Heart left ventricle (tissue), 16 donors: ENCODE measurements at regions of chr6 and their contacts with region 1.

Region 1: GRCh38 chr6:164106345-164106769 is 691.8 kb downstream of the QKI start:
- DNase-seq: peak in 4 of 5 donors; percentile 74 to 86 (median 80)
- ATAC-seq: peak; percentile 38 to 57 (median 49)
- H3K4me3 ChIP-seq: peak overlapping the region in 10 of 12 donors; percentile 4 to 43 (median 34)
- H3K27ac ChIP-seq: peak overlapping the region; percentile 77 to 97 (median 93)
- H3K4me1 ChIP-seq: peaks cover 0 to 62% (median 38%) of the 10 kb centered on the region in 12 donors
- H3K27me3 ChIP-seq: no peaks in the 10 kb centered on the region
- CTCF ChIP-seq: peak; percentile 32 to 73 (median 62)
- POLR2A ChIP-seq: no peak

Region 2: DNA sequence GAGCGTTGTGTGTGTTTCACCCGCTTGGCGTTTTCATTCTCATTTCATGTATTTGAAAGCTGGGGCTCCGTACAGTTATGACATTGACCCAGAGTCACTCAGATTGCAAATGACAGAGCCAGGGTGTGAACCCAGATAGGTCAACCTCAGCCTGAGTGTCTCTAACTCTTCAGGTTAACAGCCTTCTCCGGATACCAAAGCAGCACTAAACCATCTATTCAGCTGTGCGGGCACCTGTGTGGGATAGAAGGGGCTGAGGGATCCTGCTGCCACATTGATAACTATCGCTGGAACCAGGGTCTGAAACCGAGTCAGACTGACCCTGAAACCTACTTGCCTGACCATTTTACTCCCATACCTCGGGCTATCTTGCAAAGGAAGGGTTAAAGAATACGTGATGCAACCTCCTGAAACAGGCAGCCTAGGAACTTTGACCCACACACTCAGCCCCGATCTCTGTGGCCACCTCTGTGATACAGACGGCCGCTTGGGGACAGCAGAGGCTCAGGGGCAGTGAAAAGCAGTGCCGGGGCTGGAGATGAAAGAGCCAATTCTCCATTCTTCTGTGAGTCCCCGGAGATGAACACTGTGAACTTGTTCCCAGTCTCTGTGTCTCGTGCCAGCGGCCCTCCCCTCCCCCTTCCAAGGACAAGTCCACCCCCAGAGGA is 925.3 kb before region 1 on chr6:
- intact Hi-C with region 1: loop called in 8 of 10 experiments (anchors 5 to 10 kb)
- DNase-seq: peak; percentile 80 to 87 (median 84)
- ATAC-seq: peak; percentile 93 to 97 (median 96)
- H3K4me3 ChIP-seq: peak overlapping the region in 6 of 12 donors; percentile 13 to 33 (median 16)
- H3K27ac ChIP-seq: peak overlapping the region in 5 of 12 donors; percentile 28 to 56 (median 40)
- H3K4me1 ChIP-seq: peaks cover 0 to 29% (median 13%) of the 10 kb centered on the region in 12 donors
- H3K27me3 ChIP-seq: no peaks in the 10 kb centered on the region
- CTCF ChIP-seq: peak; percentile 75 to 94 (median 90)
- POLR2A ChIP-seq: no peak

Region 3: DNA sequence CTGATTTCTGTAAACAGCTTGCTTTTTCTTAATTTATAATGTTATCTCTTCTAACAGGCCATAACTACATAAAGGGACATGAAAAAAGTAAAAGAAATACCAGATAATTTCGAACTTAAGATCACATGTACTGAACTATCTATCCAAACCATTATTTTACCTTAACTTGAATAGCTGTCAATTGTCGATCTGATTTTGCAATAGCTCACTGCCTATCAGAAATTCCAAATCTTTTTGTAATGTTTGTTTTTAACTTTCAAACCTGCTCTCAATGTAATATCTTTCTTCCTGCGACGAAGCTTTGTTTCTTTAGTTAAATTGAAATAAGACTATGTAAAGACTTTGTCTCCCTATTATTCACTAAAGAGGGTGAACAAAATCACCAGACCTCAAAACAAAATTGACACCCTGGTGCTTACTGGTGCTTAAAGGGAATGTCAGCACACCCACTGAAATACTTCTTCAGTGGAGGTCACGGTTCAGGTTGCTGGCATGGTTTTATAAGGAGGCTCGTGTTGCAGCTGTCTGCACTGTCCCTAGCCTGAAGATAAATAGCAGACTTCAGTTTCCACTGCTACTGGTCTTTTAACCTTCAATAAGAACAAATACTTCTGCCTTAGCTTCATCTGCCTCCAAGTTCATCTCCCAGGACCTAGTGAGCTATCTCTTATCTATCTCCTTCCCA is 809.4 kb before region 1 on chr6:
- intact Hi-C with region 1: loop called in 1 of 10 experiments (anchors 10 kb)
- DNase-seq: peak in 1 of 5 donors; percentile 55
- ATAC-seq: peak; percentile 63 to 90 (median 84)
- H3K4me3 ChIP-seq: no peak overlapping the region
- H3K27ac ChIP-seq: peak overlapping the region; percentile 8 to 76 (median 52)
- H3K4me1 ChIP-seq: peaks cover 0 to 27% (median 8%) of the 10 kb centered on the region in 12 donors
- H3K27me3 ChIP-seq: no peaks in the 10 kb centered on the region
- CTCF ChIP-seq: no peak
- POLR2A ChIP-seq: no peak

Region 4: GRCh38 chr6:163579880-163580295 is 526.5 kb before region 1 on chr6:
- intact Hi-C with region 1: loop called in 6 of 10 experiments (anchors 5 to 10 kb)
- DNase-seq: peak in 1 of 5 donors; percentile 29
- ATAC-seq: peak in 3 of 4 donors; percentile 19 to 44 (median 42)
- H3K4me3 ChIP-seq: no peak overlapping the region
- H3K27ac ChIP-seq: peak overlapping the region in 6 of 12 donors; percentile 3 to 60 (median 32)
- H3K4me1 ChIP-seq: peaks cover 0 to 38% (median 16%) of the 10 kb centered on the region in 12 donors
- H3K27me3 ChIP-seq: no peaks in the 10 kb centered on the region
- CTCF ChIP-seq: peak in 5 of 12 donors; percentile 17 to 32 (median 24)
- POLR2A ChIP-seq: no peak

Region 5: GRCh38 chr6:163745536-163746400 is 360.6 kb before region 1 on chr6:
- intact Hi-C with region 1: loop called in 7 of 10 experiments (anchors 2 to 10 kb)
- DNase-seq: peak in 4 of 5 donors; percentile 70 to 89 (median 84)
- ATAC-seq: peak; percentile 94 to 96 (median 95)
- H3K4me3 ChIP-seq: no peak overlapping the region
- H3K27ac ChIP-seq: peak overlapping the region; percentile 32 to 85 (median 78)
- H3K4me1 ChIP-seq: peaks cover 0 to 53% (median 19%) of the 10 kb centered on the region in 12 donors
- H3K27me3 ChIP-seq: no peaks in the 10 kb centered on the region
- CTCF ChIP-seq: no peak
- POLR2A ChIP-seq: no peak

Region 6: DNA sequence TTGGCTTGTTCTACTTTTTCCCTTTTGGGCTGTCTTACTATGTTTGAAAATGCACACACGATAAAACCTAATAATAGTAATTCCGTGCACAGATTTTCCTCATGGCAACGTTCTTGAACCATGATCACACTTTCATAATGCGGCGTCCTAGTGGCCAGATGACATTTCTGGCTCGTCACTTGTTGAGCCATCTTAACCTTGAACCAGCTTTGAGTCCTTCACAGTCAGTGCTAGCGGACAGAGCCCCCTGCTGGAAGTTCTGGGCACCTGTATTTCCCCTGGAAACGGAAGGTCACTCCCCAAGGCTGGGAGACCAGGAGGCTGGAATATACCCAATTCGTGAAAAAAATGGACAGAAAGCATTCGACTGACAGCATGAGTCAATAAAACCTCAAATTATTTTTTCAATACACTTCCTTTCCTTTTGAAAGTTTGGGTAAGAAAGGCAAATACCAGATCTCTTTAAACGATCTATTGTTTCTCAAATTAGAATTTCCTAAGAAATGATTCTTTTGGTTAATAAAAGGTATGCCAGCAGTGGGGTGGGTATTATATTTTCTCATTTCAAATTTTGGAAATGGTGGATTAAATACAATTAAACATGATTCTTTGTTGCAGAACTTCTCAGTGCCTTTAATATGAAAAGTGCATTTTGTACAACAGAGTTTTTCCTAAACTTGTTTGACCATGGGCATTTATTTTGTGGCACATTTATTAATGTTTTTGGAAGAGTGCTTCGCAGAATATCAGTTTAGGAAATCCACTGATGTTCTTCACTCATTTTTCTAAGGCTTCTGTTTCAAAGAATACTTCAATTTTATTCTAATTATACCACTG is 149.6 kb before region 1 on chr6:
- intact Hi-C with region 1: loop called in 3 of 10 experiments (anchors 2 to 5 kb)
- DNase-seq: peak; percentile 85 to 87 (median 86)
- ATAC-seq: peak; percentile 77 to 91 (median 90)
- H3K4me3 ChIP-seq: no peak overlapping the region
- H3K27ac ChIP-seq: peak overlapping the region in 9 of 12 donors; percentile 2 to 93 (median 32)
- H3K4me1 ChIP-seq: peaks cover 0 to 58% (median 16%) of the 10 kb centered on the region in 12 donors
- H3K27me3 ChIP-seq: no peaks in the 10 kb centered on the region
- CTCF ChIP-seq: peak; percentile 89 to 97 (median 94)
- POLR2A ChIP-seq: no peak

Region 7: DNA sequence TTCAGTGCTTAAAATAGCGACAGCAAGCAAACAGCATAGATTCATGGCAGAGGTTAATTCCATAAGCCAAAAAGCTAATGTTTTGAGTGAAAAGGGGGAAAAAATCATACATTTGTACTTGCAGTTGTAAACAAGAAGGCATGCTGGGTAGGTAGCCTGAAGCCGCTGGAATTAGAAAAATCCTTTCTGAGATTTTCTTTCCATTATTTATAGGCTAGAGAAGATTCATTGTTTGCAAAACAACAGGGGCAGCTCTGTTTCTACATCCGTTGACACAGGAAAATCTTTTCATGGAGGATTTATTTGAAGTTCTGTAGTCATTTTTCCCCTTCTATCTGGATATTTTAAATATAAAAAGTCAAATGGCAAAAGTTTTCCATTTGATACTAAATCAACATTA is 152.1 kb after region 1 on chr6:
- intact Hi-C with region 1: no loop called
- DNase-seq: no peak
- ATAC-seq: no peak
- H3K4me3 ChIP-seq: no peak overlapping the region
- H3K27ac ChIP-seq: no peak overlapping the region
- H3K4me1 ChIP-seq: no peaks in the 10 kb centered on the region
- H3K27me3 ChIP-seq: no peaks in the 10 kb centered on the region
- CTCF ChIP-seq: no peak
- POLR2A ChIP-seq: no peak